Prostate gland (tissue), 2 donors: ENCODE measurements at regions of chr6 and their contacts with region 1.

Region 1: GRCh38 chr6:36839749-36840431 is 646 bp upstream of the CPNE5 start:
- DNase-seq: no peak
- H3K4me3 ChIP-seq: peak overlapping the region; percentile 26 to 44
- H3K27ac ChIP-seq: peak overlapping the region in 1 of 2 donors; percentile 36
- H3K4me1 ChIP-seq: peaks cover 9% of the 10 kb centered on the region
- H3K27me3 ChIP-seq: no peaks in the 10 kb centered on the region
- CTCF ChIP-seq: no peak
- POLR2A ChIP-seq: no peak

Region 2: DNA sequence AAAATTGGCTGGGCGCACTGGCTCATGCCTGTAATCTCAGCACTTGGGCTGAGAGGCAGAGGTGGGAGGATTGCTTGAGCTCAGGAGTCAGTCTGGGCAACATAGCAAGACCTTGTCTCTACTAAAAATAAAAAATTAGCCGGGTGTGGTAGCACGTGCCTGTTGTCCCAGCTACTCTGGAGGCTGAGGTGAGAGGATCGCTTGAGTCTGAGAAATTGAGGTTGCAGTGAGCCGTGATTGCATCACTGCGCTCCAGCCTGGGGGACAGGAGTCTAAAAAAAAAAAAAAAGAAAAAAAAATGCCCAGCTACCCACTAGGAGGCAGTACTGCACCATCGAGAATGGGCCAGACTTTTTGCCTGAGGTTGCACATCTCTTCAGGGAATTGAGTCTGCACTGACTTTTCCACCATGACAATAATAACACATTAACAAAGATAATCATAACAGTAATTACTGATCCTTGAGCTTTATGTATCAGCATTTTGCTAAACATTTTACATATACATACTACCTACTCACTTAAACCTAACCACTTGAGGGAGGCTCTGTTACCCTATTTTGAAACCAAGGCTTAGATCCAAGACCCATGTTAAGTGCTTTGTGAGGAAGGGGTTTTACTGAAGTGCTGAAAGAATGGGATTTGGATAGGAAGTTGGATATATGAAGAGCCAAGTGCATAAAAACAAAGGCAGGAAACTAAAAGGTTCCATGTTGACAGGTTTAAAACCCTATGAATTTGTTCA is 224.7 kb before region 1 on chr6:
- intact Hi-C with region 1: loop called (anchors 10 kb)
- DNase-seq: no peak
- H3K4me3 ChIP-seq: no peak overlapping the region
- H3K27ac ChIP-seq: no peak overlapping the region
- H3K4me1 ChIP-seq: peaks cover 6% of the 10 kb centered on the region
- H3K27me3 ChIP-seq: no peaks in the 10 kb centered on the region
- CTCF ChIP-seq: peak; percentile 28 to 62 (median 52)
- POLR2A ChIP-seq: no peak